GM12878 (cell line): ENCODE measurements at regions of chr3 and their contacts with region 1.

Region 1: DNA sequence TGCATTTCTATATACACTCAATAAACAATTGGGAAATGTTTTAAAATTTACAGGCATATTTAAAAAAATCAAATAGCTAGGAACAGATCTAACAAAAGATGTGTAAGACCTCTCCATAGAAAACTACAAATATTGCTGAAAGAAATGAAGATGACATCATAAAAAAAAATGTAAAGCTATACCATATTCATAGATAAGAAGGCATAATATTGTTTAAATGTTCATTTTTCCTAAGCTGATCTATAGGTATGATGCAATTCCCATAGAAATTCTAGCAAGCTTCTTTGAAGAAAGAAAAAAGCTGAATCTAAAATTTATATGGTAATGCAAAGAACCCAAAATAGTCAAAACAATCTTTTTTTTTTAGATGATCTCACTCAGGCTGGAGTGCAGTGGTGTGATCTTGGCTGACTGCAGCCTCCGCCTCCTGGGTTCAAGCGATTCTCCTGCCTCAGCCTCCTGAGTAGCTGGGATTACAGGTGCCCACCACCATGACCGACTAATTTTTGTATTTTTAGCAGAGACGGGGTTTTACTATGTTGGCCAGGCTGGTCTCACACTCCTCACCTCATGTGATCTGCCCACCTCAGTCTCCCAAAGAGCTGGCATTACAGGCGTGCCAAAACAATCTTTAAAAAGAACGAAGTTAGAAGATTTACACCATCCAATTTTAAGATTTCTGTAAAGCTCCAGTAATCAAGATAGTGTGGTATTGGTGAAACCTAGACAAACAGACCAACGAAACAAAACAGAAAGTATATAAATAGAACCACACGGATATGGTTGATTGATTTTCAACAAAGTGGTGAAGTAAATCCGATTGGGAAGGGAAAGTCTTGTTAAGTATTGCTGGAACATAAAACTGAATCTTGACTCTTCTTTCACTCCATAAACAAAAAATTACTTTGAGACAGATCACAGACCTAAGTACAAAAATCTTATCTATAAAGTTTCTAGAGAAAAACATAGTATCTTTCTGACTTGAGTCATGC is 6.3 kb upstream of the BHLHE40 start:
- DNase-seq: peak; percentile 68
- ATAC-seq: peak; percentile 23
- H3K4me3 ChIP-seq: peak overlapping the region; percentile 37; the same call in 1 of the 2 replicates
- H3K27ac ChIP-seq: peak overlapping the region; percentile 45
- H3K4me1 ChIP-seq: peaks cover 29% of the 10 kb centered on the region
- H3K27me3 ChIP-seq: no peaks in the 10 kb centered on the region
- CTCF ChIP-seq: no peak
- EP300 ChIP-seq: peak; percentile 60 to 86; a peak in 3 of 4 replicates
- POLR2A ChIP-seq: no peak
- RAD21 ChIP-seq: no peak

Region 2: DNA sequence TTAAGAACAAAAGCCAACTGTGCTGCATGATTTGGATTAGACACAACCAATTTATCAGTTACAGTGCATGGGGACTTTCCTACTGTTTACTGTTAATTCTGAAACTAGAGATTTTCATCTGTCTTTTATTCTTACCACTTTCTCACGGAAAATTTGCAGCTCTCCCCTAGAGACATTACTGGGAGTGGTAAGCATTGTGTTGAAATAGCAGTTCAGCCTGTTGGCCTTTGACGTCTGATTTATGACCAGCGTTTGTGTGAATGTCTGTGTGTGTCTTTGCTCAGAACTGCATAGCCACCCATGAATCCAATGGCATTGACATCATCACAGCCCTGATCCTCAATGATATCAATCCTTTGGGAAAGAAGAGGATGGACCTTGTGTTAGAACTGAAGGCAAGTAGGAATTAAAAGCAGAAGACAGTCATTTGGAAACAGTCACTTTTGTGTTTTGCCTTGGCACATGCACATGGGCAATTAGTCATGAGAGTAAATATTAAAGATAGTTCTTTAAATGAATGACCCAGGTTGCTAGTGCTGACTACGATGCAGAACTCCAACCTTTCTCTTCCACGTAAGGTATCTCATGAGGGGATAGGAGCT is 195.9 kb before region 1 on chr3:
- CTCF ChIA-PET with region 1: interaction called, 32 read pairs
- POLR2A ChIA-PET with region 1: interaction called, 14 read pairs
- RAD21 ChIA-PET with region 1: interaction called, 47 read pairs
- SMC1A ChIA-PET with region 1: interaction called, 36 read pairs
- in situ Hi-C with region 1: no loop called
- intact Hi-C with region 1: loop called (anchors 1 kb)
- DNase-seq: peak; percentile 98
- ATAC-seq: peak; percentile 82
- H3K4me3 ChIP-seq: no peak overlapping the region
- H3K27ac ChIP-seq: peak overlapping the region; percentile 99
- H3K4me1 ChIP-seq: peaks cover 32% of the 10 kb centered on the region
- H3K27me3 ChIP-seq: no peaks in the 10 kb centered on the region
- CTCF ChIP-seq: no peak
- EP300 ChIP-seq: peak; percentile 90 to 97; a peak in 3 of 4 replicates
- POLR2A ChIP-seq: peak; percentile 53; the same call in 1 of the 2 replicates
- RAD21 ChIP-seq: peak; percentile 41

Region 3: GRCh38 chr3:4834403-4834866 is 138.5 kb before region 1 on chr3:
- CTCF ChIA-PET with region 1: interaction called, 35 read pairs
- POLR2A ChIA-PET with region 1: interaction called, 10 read pairs
- RAD21 ChIA-PET with region 1: interaction called, 325 read pairs
- SMC1A ChIA-PET with region 1: interaction called, 129 read pairs
- in situ Hi-C with region 1: no loop called
- intact Hi-C with region 1: loop called (anchors 1 kb)
- DNase-seq: no peak
- ATAC-seq: peak; percentile 63
- H3K4me3 ChIP-seq: no peak overlapping the region
- H3K27ac ChIP-seq: peak overlapping the region; percentile 43; the same call in 1 of the 2 replicates
- H3K4me1 ChIP-seq: peaks cover 43% of the 10 kb centered on the region
- H3K27me3 ChIP-seq: no peaks in the 10 kb centered on the region
- CTCF ChIP-seq: no peak
- EP300 ChIP-seq: peak; percentile 89 to 95; a peak in 3 of 4 replicates
- POLR2A ChIP-seq: no peak
- RAD21 ChIP-seq: 0 out of 2 replicates have a peak, but pooled peaks have one; percentile 4

Region 4: DNA sequence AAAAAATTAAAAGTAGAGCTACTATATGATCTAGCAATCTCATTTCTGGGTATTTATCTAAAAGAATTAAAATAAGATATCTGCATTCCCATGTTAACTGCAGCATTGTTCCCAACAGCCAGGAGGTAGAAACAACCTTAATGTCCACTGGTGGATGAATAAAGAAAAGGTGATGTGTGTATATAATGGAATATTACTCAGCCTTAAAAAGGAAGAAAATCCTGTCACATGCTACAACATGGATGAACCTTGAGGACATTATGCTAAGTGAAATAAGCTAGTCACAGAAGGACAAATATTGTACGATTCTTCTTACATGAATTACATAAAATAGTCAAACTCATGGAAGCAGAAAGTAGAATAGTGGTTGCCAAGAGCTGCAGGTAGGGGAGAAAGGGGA is 113.2 kb before region 1 on chr3:
- CTCF ChIA-PET with region 1: interaction called, 78 read pairs
- POLR2A ChIA-PET with region 1: no interaction called
- RAD21 ChIA-PET with region 1: interaction called, 151 read pairs
- SMC1A ChIA-PET with region 1: interaction called, 167 read pairs
- in situ Hi-C with region 1: no loop called
- intact Hi-C with region 1: no loop called
- DNase-seq: no peak
- ATAC-seq: no peak
- H3K4me3 ChIP-seq: no peak overlapping the region
- H3K27ac ChIP-seq: no peak overlapping the region
- H3K4me1 ChIP-seq: no peaks in the 10 kb centered on the region
- H3K27me3 ChIP-seq: no peaks in the 10 kb centered on the region
- CTCF ChIP-seq: no peak
- EP300 ChIP-seq: no peak
- POLR2A ChIP-seq: no peak
- RAD21 ChIP-seq: no peak

Region 5: DNA sequence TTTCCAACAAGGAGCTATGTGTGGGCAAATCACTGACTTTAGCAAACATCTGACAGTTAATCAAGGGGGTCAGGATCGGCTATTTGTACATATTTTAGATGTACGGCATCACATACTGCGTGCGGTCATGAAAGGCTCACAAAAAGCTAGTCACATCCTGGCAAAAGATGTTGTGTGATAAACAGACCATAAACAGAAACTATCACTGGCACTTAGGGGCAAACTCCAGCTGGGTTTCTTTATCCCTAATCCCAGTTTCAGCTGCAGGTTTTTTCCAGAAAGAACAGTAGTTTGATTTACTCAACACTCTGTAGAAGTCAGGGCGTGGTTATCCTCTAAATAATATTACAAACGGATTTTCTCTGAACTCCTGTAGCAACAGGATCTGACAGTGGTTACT is 106.1 kb before region 1 on chr3:
- CTCF ChIA-PET with region 1: interaction called, 3 read pairs
- POLR2A ChIA-PET with region 1: no interaction called
- RAD21 ChIA-PET with region 1: interaction called, 5 read pairs
- SMC1A ChIA-PET with region 1: interaction called, 11 read pairs
- in situ Hi-C with region 1: no loop called
- intact Hi-C with region 1: no loop called
- DNase-seq: no peak
- ATAC-seq: no peak
- H3K4me3 ChIP-seq: no peak overlapping the region
- H3K27ac ChIP-seq: no peak overlapping the region
- H3K4me1 ChIP-seq: peaks cover 10% of the 10 kb centered on the region
- H3K27me3 ChIP-seq: no peaks in the 10 kb centered on the region
- CTCF ChIP-seq: no peak
- EP300 ChIP-seq: no peak
- POLR2A ChIP-seq: no peak
- RAD21 ChIP-seq: no peak

Region 6: GRCh38 chr3:4928277-4928789 is 44.6 kb before region 1 on chr3:
- CTCF ChIA-PET with region 1: interaction called, 9 read pairs
- POLR2A ChIA-PET with region 1: no interaction called
- RAD21 ChIA-PET with region 1: interaction called, 12 read pairs
- SMC1A ChIA-PET with region 1: interaction called, 18 read pairs
- in situ Hi-C with region 1: no loop called
- intact Hi-C with region 1: no loop called
- DNase-seq: no peak
- ATAC-seq: peak; percentile 58
- H3K4me3 ChIP-seq: no peak overlapping the region
- H3K27ac ChIP-seq: no peak overlapping the region
- H3K4me1 ChIP-seq: peaks cover 19% of the 10 kb centered on the region
- H3K27me3 ChIP-seq: no peaks in the 10 kb centered on the region
- CTCF ChIP-seq: no peak
- EP300 ChIP-seq: peak; percentile 18 to 20; a peak in 2 of 4 replicates
- POLR2A ChIP-seq: no peak
- RAD21 ChIP-seq: no peak

Region 7: DNA sequence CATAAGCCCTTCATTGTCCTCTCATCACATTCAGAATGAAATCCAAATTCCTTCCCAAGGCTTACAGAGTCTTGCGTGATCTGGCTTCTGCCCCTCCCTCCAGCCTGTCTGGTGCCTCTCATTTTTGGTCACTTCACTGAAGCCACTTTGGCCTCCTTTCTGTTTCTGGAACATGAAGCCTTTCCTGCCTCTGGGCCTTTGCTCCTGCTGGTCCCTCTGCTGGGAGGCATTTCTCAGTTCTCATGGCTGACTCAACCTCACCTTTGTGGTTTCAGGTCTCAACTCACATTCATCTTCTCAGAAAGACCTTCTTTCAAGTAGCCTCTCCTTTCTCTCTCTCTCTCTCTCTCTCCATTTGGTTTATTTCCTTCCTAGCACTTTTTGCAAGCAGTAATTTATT is 37.6 kb before region 1 on chr3:
- CTCF ChIA-PET with region 1: interaction called, 7 read pairs
- POLR2A ChIA-PET with region 1: interaction called, 3 read pairs
- RAD21 ChIA-PET with region 1: interaction called, 8 read pairs
- SMC1A ChIA-PET with region 1: interaction called, 15 read pairs
- in situ Hi-C with region 1: no loop called
- intact Hi-C with region 1: loop called (anchors 1 kb)
- DNase-seq: no peak
- ATAC-seq: peak; percentile 80
- H3K4me3 ChIP-seq: no peak overlapping the region
- H3K27ac ChIP-seq: no peak overlapping the region
- H3K4me1 ChIP-seq: peaks cover 14% of the 10 kb centered on the region; the same call in 1 of the 2 replicates
- H3K27me3 ChIP-seq: no peaks in the 10 kb centered on the region
- CTCF ChIP-seq: no peak
- EP300 ChIP-seq: no peak
- POLR2A ChIP-seq: no peak
- RAD21 ChIP-seq: 0 out of 2 replicates have a peak, but pooled peaks have one; percentile 14

Region 8: GRCh38 chr3:5298453-5298852 is 325.5 kb after region 1 on chr3:
- CTCF ChIA-PET with region 1: no interaction called
- POLR2A ChIA-PET with region 1: no interaction called
- RAD21 ChIA-PET with region 1: no interaction called
- SMC1A ChIA-PET with region 1: no interaction called
- in situ Hi-C with region 1: no loop called
- intact Hi-C with region 1: no loop called
- DNase-seq: peak; percentile 69
- ATAC-seq: peak; percentile 98
- H3K4me3 ChIP-seq: no peak overlapping the region
- H3K27ac ChIP-seq: no peak overlapping the region
- H3K4me1 ChIP-seq: peaks cover 14% of the 10 kb centered on the region
- H3K27me3 ChIP-seq: no peaks in the 10 kb centered on the region
- CTCF ChIP-seq: no peak
- EP300 ChIP-seq: peak; percentile 68 to 92; a peak in 3 of 4 replicates
- POLR2A ChIP-seq: no peak
- RAD21 ChIP-seq: no peak

Region 9: GRCh38 chr3:6878731-6879130 is 1905.8 kb after region 1 on chr3:
- CTCF ChIA-PET with region 1: no interaction called
- POLR2A ChIA-PET with region 1: no interaction called
- RAD21 ChIA-PET with region 1: no interaction called
- SMC1A ChIA-PET with region 1: no interaction called
- in situ Hi-C with region 1: no loop called
- intact Hi-C with region 1: no loop called
- DNase-seq: no peak
- ATAC-seq: no peak
- H3K4me3 ChIP-seq: no peak overlapping the region
- H3K27ac ChIP-seq: no peak overlapping the region
- H3K4me1 ChIP-seq: no peaks in the 10 kb centered on the region
- H3K27me3 ChIP-seq: no peaks in the 10 kb centered on the region
- CTCF ChIP-seq: no peak
- EP300 ChIP-seq: no peak
- POLR2A ChIP-seq: no peak
- RAD21 ChIP-seq: no peak